ENCODE measurements at regions of chr4 and their contacts with region 1.

Region 1: DNA sequence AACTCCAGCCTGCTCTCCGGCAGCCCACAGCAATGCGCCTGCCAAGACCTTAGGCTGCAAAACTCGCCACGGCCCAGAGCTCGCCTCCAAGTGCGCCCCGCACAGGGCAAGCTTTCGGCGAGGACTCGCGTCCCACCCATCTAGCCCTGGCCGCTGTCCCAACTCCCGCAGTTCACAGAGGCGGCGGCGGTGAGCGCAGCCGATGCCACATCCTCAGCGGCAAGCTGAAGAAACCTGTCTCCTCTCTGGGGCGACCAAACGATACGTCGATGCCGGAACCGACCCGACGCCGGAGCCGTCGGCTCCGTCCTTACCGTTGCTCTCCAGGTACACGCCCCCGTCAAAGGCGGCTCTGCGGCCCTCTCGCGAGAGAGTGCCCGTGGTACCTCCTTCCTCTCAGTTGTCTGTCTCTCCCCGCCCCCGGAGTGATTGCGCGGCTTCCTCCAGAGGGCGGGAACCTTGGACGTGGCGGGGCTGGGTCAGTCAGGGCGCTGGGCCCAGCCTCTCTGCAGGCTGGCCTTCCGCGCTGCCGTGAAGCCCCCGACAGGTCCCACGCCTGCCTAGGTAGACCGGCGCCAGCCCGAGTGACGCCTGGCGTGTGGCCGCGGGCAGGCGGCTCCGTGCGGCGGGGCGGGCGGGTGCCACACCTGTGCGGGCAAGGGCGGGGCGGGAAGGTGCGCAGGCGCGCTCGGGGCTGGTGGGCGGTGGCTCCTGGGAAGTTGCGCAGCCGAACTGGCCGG is 380 bp upstream of the RAB33B start:
- DNase-seq: peak; percentile 99
- ATAC-seq: peak; percentile 90
- H3K4me3 Mint-ChIP-seq: peak overlapping the region; percentile 91
- H3K27ac Mint-ChIP-seq: peak overlapping the region; percentile 98
- H3K4me1 Mint-ChIP-seq: peaks cover 48% of the 10 kb centered on the region
- H3K27me3 Mint-ChIP-seq: no peaks in the 10 kb centered on the region

Region 2: GRCh38 chr4:139015269-139015947 is 438.1 kb before region 1 on chr4 and contains the start of gene NOCT:
- CTCF ChIA-PET with region 1: no interaction called
- POLR2A ChIA-PET with region 1: no interaction called
- intact Hi-C with region 1: loop called in 1 of 2 experiments (anchors 1 kb)
- DNase-seq: peak; percentile 98
- ATAC-seq: peak; percentile 92
- H3K4me3 Mint-ChIP-seq: peak within 1 kb of the TSS; percentile 90
- H3K27ac Mint-ChIP-seq: peak within 1 kb of the TSS; percentile 96
- H3K4me1 Mint-ChIP-seq: peaks cover 41% of the 10 kb centered on the region
- H3K27me3 Mint-ChIP-seq: no peaks in the 10 kb centered on the region
- total RNA-seq, gene NOCT: 16.5 to 20.5 TPM

Region 3: GRCh38 chr4:139144161-139144859 is 309.2 kb before region 1 on chr4:
- CTCF ChIA-PET with region 1: no interaction called
- POLR2A ChIA-PET with region 1: no interaction called
- intact Hi-C with region 1: no loop called
- DNase-seq: no peak
- ATAC-seq: no peak
- H3K4me3 Mint-ChIP-seq: no peak overlapping the region
- H3K27ac Mint-ChIP-seq: no peak overlapping the region
- H3K4me1 Mint-ChIP-seq: peaks cover 12% of the 10 kb centered on the region
- H3K27me3 Mint-ChIP-seq: no peaks in the 10 kb centered on the region

Region 4: GRCh38 chr4:139416073-139416673 is 37.4 kb before region 1 on chr4:
- CTCF ChIA-PET with region 1: interaction called, 3 read pairs
- POLR2A ChIA-PET with region 1: no interaction called
- intact Hi-C with region 1: loop called (anchors 1 to 2 kb)
- DNase-seq: peak; percentile 18
- ATAC-seq: no peak
- H3K4me3 Mint-ChIP-seq: no peak overlapping the region
- H3K27ac Mint-ChIP-seq: no peak overlapping the region
- H3K4me1 Mint-ChIP-seq: peaks cover 12% of the 10 kb centered on the region
- H3K27me3 Mint-ChIP-seq: no peaks in the 10 kb centered on the region

Region 5: DNA sequence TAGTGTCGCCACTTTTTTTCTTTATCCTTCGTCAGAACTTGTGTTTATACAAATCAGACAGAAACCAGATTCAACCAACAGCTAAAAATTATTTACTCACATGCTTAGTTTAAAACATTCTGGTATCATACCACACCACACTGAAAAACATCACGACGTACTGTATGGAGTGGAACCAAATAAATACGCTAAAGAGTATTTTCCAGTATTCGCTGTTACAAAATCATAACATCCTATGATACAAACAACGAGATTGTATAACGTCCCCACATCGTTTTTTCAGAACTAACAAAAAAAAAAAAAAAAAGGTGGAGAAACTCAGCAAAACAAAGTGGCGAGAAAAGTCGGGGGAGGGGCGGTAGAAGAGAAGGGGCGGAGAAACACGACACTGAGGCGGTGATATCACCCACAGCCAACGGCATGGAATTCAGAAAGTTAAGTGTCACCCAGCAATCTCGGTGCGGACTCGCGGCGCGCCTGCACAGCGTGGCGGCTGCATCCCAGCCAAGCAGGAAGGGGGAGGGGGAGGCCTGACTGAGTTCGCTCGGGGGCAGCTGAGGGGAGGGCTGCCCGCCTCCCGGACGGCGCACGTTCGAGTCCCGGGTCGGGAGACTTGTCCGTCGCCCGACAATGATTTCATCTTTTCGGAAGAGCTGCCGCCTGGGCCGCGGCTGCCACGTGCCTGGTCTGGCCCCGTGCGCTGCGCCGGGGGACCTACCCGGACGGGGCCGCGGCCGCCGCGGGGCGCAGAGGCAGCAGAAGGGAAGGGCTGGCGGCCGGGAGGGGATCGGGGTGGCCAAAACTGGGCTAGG is 101.6 kb after region 1 on chr4:
- CTCF ChIA-PET with region 1: interaction called, 3 read pairs
- POLR2A ChIA-PET with region 1: interaction called, 9 read pairs
- intact Hi-C with region 1: loop called (anchors 1 kb)
- DNase-seq: peak; percentile 91
- ATAC-seq: peak; percentile 76
- H3K4me3 Mint-ChIP-seq: peak overlapping the region; percentile 96
- H3K27ac Mint-ChIP-seq: peak overlapping the region; percentile 91
- H3K4me1 Mint-ChIP-seq: peaks cover 45% of the 10 kb centered on the region
- H3K27me3 Mint-ChIP-seq: no peaks in the 10 kb centered on the region

Region 6: GRCh38 chr4:140427106-140427961 is 973.8 kb after region 1 on chr4 and contains the start of gene CLGN:
- CTCF ChIA-PET with region 1: no interaction called
- POLR2A ChIA-PET with region 1: no interaction called
- intact Hi-C with region 1: loop called in 1 of 2 experiments (anchors 5 kb)
- DNase-seq: peak; percentile 74
- ATAC-seq: peak; percentile 88
- H3K4me3 Mint-ChIP-seq: peak within 1 kb of the TSS; percentile 72
- H3K27ac Mint-ChIP-seq: peak within 1 kb of the TSS; percentile 20
- H3K4me1 Mint-ChIP-seq: peaks cover 5% of the 10 kb centered on the region
- H3K27me3 Mint-ChIP-seq: peaks cover 40% of the 10 kb centered on the region
- total RNA-seq, gene CLGN: 0.18 to 0.19 TPM